ENCODE measurements at regions of chr3 and their contacts with region 1.

Region 1: GRCh38 chr3:122514123-122515019 is at the start of gene KPNA1:
- DNase-seq: peak; percentile 73 to 93 (median 83)
- ATAC-seq: peak; percentile 88 to 93 (median 91)
- H3K4me3 ChIP-seq: peak within 1 kb of the TSS; percentile 61 to 62
- H3K4me3 Mint-ChIP-seq: peak within 1 kb of the TSS; percentile 82 to 87 (median 84)
- H3K27ac ChIP-seq: peak within 1 kb of the TSS; percentile 82
- H3K27ac Mint-ChIP-seq: peak within 1 kb of the TSS; percentile 89 to 91
- H3K4me1 ChIP-seq: peaks cover 6 to 17% of the 10 kb centered on the region in 2 experiments
- H3K4me1 Mint-ChIP-seq: peaks cover 45 to 51% (median 48%) of the 10 kb centered on the region in 3 donors
- H3K27me3 ChIP-seq: no peaks in the 10 kb centered on the region
- H3K27me3 Mint-ChIP-seq: no peaks in the 10 kb centered on the region
- total RNA-seq, gene KPNA1: 55.2 to 65.0 (median 57.5) TPM

Region 2: GRCh38 chr3:122092460-122093165 is 421.8 kb before region 1 on chr3:
- CTCF ChIA-PET with region 1: no interaction called
- POLR2A ChIA-PET with region 1: no interaction called
- DNase-seq: peak in 7 of 35 experiments; percentile 6 to 49 (median 9)
- ATAC-seq: peak; percentile 9 to 62 (median 42)
- H3K4me3 ChIP-seq: no peak overlapping the region
- H3K4me3 Mint-ChIP-seq: no peak overlapping the region
- H3K27ac ChIP-seq: no peak overlapping the region
- H3K27ac Mint-ChIP-seq: no peak overlapping the region
- H3K4me1 ChIP-seq: peaks cover 0 to 4% of the 10 kb centered on the region in 2 experiments
- H3K4me1 Mint-ChIP-seq: peaks cover 0 to 14% (median 4%) of the 10 kb centered on the region in 3 donors
- H3K27me3 ChIP-seq: no peaks in the 10 kb centered on the region
- H3K27me3 Mint-ChIP-seq: no peaks in the 10 kb centered on the region

Region 3: GRCh38 chr3:122415720-122416654 is 98.4 kb before region 1 on chr3 and contains the start of gene WDR5B:
- CTCF ChIA-PET with region 1: interaction called in 1 of 2 experiments, 6 read pairs
- POLR2A ChIA-PET with region 1: interaction called, 3 to 11 read pairs
- DNase-seq: peak; percentile 91 to 100 (median 97)
- ATAC-seq: peak; percentile 91 to 93 (median 92)
- H3K4me3 ChIP-seq: peak within 1 kb of the TSS; percentile 65 to 86
- H3K4me3 Mint-ChIP-seq: peak within 1 kb of the TSS; percentile 95 to 99 (median 99)
- H3K27ac ChIP-seq: peak within 1 kb of the TSS; percentile 82
- H3K27ac Mint-ChIP-seq: peak within 1 kb of the TSS; percentile 100
- H3K4me1 ChIP-seq: peaks cover 14 to 15% of the 10 kb centered on the region in 2 experiments
- H3K4me1 Mint-ChIP-seq: peaks cover 45 to 66% (median 61%) of the 10 kb centered on the region in 3 donors
- H3K27me3 ChIP-seq: no peaks in the 10 kb centered on the region
- H3K27me3 Mint-ChIP-seq: no peaks in the 10 kb centered on the region
- total RNA-seq, gene WDR5B: 5.8 to 11.6 (median 10.0) TPM

Region 4: DNA sequence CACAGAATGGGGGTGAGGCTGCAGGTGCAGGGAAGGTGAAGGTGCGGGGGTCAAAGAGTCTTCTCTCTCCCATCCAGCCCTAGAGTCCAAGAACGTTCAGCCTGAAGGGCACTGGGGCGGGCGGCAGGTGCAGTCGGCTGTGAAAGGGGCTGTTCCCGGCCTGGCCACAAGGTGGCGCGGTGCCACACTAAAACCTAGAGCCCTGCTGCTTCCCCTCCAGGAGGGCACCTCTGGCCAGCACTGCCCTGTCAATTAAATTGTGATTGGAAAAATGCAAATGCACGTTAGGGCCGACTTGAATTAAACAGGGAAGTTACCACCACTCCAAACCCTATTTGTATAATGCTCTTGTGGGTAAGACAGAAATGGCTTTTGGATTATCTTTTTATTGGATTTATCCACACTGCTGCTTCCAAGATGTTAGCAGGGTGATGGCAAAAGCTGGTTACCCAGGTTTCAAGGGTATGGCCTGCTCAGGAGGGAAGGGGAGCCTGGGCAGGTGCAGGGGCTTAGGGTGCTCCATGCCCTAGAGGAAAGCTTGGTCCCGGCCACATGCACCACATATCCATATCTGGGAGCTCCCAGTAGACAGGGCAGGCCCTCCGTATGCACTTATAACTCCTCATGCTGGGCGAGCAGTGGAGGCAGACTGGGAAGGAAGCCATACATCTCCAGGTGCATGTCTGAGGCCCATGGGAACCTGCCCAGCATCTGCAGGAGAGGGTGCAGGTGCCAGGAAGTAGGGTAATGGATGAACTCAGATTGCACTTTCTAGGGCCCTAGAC is 814.7 kb after region 1 on chr3:
- CTCF ChIA-PET with region 1: no interaction called
- POLR2A ChIA-PET with region 1: no interaction called
- DNase-seq: peak in 34 of 35 experiments; percentile 5 to 79 (median 60)
- ATAC-seq: peak; percentile 59 to 76 (median 73)
- H3K4me3 ChIP-seq: no peak overlapping the region
- H3K4me3 Mint-ChIP-seq: no peak overlapping the region
- H3K27ac ChIP-seq: no peak overlapping the region
- H3K27ac Mint-ChIP-seq: no peak overlapping the region
- H3K4me1 ChIP-seq: peaks cover 0 to 3% of the 10 kb centered on the region in 2 experiments
- H3K4me1 Mint-ChIP-seq: no peaks in the 10 kb centered on the region
- H3K27me3 ChIP-seq: peaks cover 0 to 17% of the 10 kb centered on the region in 2 experiments
- H3K27me3 Mint-ChIP-seq: peaks cover 0 to 4% of the 10 kb centered on the region in 2 donors

Measured in T-cell (primary cell).